ENCODE measurements at regions of chr1 and their contacts with region 1.

Region 1: DNA sequence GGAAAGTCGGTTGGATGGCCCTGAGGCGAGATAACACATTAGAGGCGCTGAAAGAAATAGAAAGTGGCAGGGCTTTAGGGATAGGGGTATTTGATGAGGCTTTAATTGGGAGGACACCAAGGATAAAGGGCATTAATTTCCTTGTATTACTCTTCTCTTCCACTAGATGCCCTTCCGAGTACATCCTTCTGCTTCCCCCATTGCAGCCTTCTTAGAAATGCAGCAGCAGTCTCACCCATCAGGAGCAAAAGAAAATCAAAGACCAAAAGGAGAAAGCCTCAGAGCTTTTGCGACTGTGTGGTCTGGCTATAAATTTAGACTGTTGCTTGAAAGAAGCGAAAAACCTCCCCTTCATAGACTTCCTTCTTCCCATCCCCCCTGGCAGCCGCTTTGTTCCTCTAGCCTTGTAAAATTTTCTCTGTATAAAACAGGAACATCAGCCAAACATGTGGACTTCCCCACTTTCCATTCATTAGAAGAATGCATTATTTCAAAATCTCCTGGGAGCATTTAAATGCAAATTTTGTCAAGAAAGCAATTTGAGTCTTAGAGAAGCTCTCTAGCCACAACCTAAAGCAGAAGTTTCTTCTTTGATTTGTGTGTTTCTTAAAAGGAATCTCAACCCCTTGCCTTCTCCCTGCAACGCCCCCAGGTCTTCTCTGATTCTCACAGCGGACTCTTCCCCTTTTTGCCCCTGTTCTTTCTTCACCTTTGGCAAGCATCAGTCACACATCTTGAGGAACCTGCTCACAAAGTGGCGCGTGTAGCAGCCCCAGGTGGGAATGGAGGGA is 76.6 kb downstream of the NDUFS5 start:
- DNase-seq: peak in 1 of 2 donors; percentile 84
- H3K4me3 ChIP-seq: no peak overlapping the region
- H3K27ac ChIP-seq: peak overlapping the region in 4 of 5 donors; percentile 31 to 96 (median 66)
- H3K4me1 ChIP-seq: peaks cover 30 to 53% (median 41%) of the 10 kb centered on the region in 4 donors
- H3K27me3 ChIP-seq: no peaks in the 10 kb centered on the region
- CTCF ChIP-seq: peak in 5 of 7 experiments; percentile 60 to 93 (median 69)
- EP300 ChIP-seq: no peak
- POLR2A ChIP-seq: no peak

Region 2: GRCh38 chr1:39145331-39145965 is 42.7 kb after region 1 on chr1:
- intact Hi-C with region 1: no loop called
- DNase-seq: no peak
- H3K4me3 ChIP-seq: no peak overlapping the region
- H3K27ac ChIP-seq: no peak overlapping the region
- H3K4me1 ChIP-seq: peaks cover 0 to 44% (median 30%) of the 10 kb centered on the region in 4 donors
- H3K27me3 ChIP-seq: no peaks in the 10 kb centered on the region
- CTCF ChIP-seq: no peak
- EP300 ChIP-seq: no peak
- POLR2A ChIP-seq: no peak

Region 3: DNA sequence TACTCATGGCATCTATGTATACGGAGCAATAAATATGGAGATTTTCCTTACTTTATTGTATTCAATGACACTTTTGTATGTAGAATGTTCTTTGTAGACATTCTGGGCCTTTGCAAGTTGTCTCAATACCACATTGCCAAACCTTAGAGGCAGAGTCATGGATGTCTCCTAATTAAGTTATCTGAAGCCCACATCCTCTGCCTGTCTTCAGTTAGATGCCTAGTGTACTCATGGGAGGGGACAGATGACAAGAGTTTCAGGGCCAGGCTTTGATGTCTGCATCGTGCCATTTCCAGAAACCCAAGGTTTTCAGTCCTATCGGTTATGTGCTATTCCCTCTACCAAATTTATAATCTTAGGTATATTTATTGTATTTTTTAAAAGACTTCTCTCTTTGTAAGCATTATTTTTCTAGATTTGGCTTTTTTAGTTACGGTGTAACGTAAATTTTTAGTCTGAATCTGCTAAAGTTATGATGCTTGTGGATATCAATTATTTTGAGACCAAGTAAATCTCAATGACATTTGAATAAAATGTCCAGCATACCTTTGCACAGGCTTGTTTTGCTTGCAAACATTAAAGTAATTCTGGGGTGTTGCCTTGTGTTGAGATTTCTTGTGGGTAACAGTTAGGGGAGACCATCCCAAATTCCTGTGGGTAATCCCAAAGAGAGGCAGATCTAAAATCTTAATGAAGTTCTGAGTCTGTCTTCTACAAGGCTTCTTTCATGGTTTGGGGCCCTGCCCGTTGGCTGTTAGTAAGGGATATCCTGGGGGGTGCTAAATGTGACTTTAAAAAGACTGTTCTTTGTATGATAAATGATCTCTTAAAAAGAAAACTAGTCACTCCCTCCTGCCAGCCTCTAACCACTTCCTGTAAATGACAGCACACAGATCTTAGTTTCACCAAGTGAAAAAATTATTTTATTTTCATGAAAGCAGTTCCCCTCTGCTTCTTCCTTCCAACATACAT is 93.8 kb after region 1 on chr1:
- intact Hi-C with region 1: loop called (anchors 10 kb)
- DNase-seq: peak in 1 of 2 donors; percentile 66
- H3K4me3 ChIP-seq: no peak overlapping the region
- H3K27ac ChIP-seq: peak overlapping the region; percentile 39 to 90 (median 85)
- H3K4me1 ChIP-seq: peaks cover 29 to 71% (median 57%) of the 10 kb centered on the region in 4 donors
- H3K27me3 ChIP-seq: no peaks in the 10 kb centered on the region
- CTCF ChIP-seq: no peak
- EP300 ChIP-seq: no peak
- POLR2A ChIP-seq: no peak

Region 4: GRCh38 chr1:39258146-39258924 is 155.6 kb after region 1 on chr1:
- intact Hi-C with region 1: loop called (anchors 5 kb)
- DNase-seq: peak; percentile 78 to 86
- H3K4me3 ChIP-seq: no peak overlapping the region
- H3K27ac ChIP-seq: peak overlapping the region in 4 of 5 donors; percentile 17 to 59 (median 35)
- H3K4me1 ChIP-seq: peaks cover 0 to 57% (median 22%) of the 10 kb centered on the region in 4 donors
- H3K27me3 ChIP-seq: no peaks in the 10 kb centered on the region
- CTCF ChIP-seq: peak in 5 of 7 experiments; percentile 83 to 91 (median 90)
- EP300 ChIP-seq: no peak
- POLR2A ChIP-seq: no peak